ENCODE measurements at regions of chr9 and their contacts with region 1.

Region 1: GRCh38 chr9:131393622-131394463 is at the start of gene PRRC2B:
- H3K4me3 Mint-ChIP-seq: peak within 1 kb of the TSS; percentile 74
- H3K27ac Mint-ChIP-seq: peak within 1 kb of the TSS; percentile 80
- H3K4me1 Mint-ChIP-seq: peaks cover 47% of the 10 kb centered on the region
- H3K27me3 Mint-ChIP-seq: peaks cover under 1% of the 10 kb centered on the region

Region 2: GRCh38 chr9:131349881-131350563 is 43.8 kb before region 1 on chr9:
- intact Hi-C with region 1: loop called (anchors 5 kb)
- H3K4me3 Mint-ChIP-seq: peak overlapping the region; percentile 72
- H3K27ac Mint-ChIP-seq: peak overlapping the region; percentile 78
- H3K4me1 Mint-ChIP-seq: peaks cover 22% of the 10 kb centered on the region
- H3K27me3 Mint-ChIP-seq: peaks cover 6% of the 10 kb centered on the region

Region 3: GRCh38 chr9:131407717-131408195 is 13.9 kb after region 1 on chr9:
- intact Hi-C with region 1: no loop called
- H3K4me3 Mint-ChIP-seq: no peak overlapping the region
- H3K27ac Mint-ChIP-seq: no peak overlapping the region
- H3K4me1 Mint-ChIP-seq: peaks cover 77% of the 10 kb centered on the region
- H3K27me3 Mint-ChIP-seq: no peaks in the 10 kb centered on the region

Region 4: DNA sequence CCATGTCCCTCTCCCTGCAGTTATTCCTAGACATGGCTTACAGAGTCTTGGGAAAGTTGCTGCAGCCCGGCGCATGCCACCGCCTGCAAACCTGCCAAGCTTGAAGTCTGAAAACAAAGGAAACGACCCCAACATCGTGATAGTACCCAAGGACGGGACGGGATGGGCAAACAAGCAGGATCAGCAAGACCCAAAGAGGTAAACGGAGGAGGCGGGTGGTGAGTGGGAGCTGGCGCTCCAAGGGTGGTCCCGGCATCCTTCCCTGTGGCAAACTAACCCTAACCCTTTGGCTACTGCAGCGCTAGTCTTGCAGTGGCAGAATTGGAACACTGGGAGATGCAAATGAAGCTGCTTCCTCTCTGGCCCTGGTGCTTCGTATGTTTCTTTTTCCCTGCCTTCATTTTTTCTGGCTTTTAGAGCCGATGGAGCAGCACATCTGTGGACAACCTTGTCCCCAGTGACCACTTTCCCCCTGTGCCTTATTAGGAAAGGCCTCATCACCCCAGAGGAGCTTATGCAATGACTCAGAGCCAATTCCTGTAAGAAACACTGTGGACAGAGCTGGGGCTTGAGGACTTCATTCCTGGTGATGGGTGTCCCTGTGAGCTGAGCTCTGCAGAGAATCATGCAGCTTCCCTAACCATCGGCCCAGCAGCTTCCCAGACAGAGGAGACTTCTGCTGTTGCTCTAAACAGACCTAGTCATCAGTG is 38.9 kb after region 1 on chr9:
- intact Hi-C with region 1: no loop called
- H3K4me3 Mint-ChIP-seq: no peak overlapping the region
- H3K27ac Mint-ChIP-seq: no peak overlapping the region
- H3K4me1 Mint-ChIP-seq: peaks cover 11% of the 10 kb centered on the region
- H3K27me3 Mint-ChIP-seq: no peaks in the 10 kb centered on the region

Region 5: GRCh38 chr9:131447148-131447547 is 53.3 kb after region 1 on chr9:
- intact Hi-C with region 1: loop called (anchors 10 kb)
- H3K4me3 Mint-ChIP-seq: no peak overlapping the region
- H3K27ac Mint-ChIP-seq: peak overlapping the region; percentile 49
- H3K4me1 Mint-ChIP-seq: peaks cover 22% of the 10 kb centered on the region
- H3K27me3 Mint-ChIP-seq: no peaks in the 10 kb centered on the region